Activated naive CD8-positive, alpha-beta T cell treated with anti-CD3 and anti-CD28 coated beads, Interleukin-2, amount 10 ng/mL, durations not matched to agents 7 days and 5 days (primary cell): ENCODE measurements at regions of chr19 and their contacts with region 1.

Region 1: GRCh38 chr19:4108767-4109625 is 14.9 kb downstream of the MAP2K2 start:
- DNase-seq: peak; percentile 80
- ATAC-seq: peak; percentile 72
- H3K4me3 Mint-ChIP-seq: peak overlapping the region; percentile 71
- H3K27ac Mint-ChIP-seq: peak overlapping the region; percentile 99
- H3K4me1 Mint-ChIP-seq: peaks cover 59% of the 10 kb centered on the region
- H3K27me3 Mint-ChIP-seq: no peaks in the 10 kb centered on the region

Region 2: GRCh38 chr19:4077882-4078614 is 30.9 kb before region 1 on chr19:
- POLR2A ChIA-PET with region 1: interaction called, 16 read pairs
- DNase-seq: peak; percentile 70
- ATAC-seq: peak; percentile 73
- H3K4me3 Mint-ChIP-seq: peak overlapping the region; percentile 87
- H3K27ac Mint-ChIP-seq: peak overlapping the region; percentile 95
- H3K4me1 Mint-ChIP-seq: peaks cover 48% of the 10 kb centered on the region
- H3K27me3 Mint-ChIP-seq: no peaks in the 10 kb centered on the region

Region 3: GRCh38 chr19:4083677-4084546 is 25.1 kb before region 1 on chr19:
- POLR2A ChIA-PET with region 1: interaction called, 96 read pairs
- DNase-seq: peak; percentile 74
- ATAC-seq: peak; percentile 59
- H3K4me3 Mint-ChIP-seq: peak overlapping the region; percentile 79
- H3K27ac Mint-ChIP-seq: peak overlapping the region; percentile 89
- H3K4me1 Mint-ChIP-seq: peaks cover 45% of the 10 kb centered on the region
- H3K27me3 Mint-ChIP-seq: no peaks in the 10 kb centered on the region